Activated CD8-positive, alpha-beta T cell treated with anti-CD3 and anti-CD28 coated beads, Interleukin-2, amount 10 ng/mL, durations not matched to agents 7 days and 5 days (primary cell): ENCODE measurements at regions of chr20 and their contacts with region 1.

Region 1: GRCh38 chr20:51480507-51481270 is 61.8 kb downstream of the NFATC2 start:
- DNase-seq: peak; percentile 48
- ATAC-seq: peak; percentile 59
- H3K4me3 Mint-ChIP-seq: peak overlapping the region; percentile 53
- H3K27ac Mint-ChIP-seq: peak overlapping the region; percentile 92
- H3K4me1 Mint-ChIP-seq: peaks cover 92% of the 10 kb centered on the region
- H3K27me3 Mint-ChIP-seq: no peaks in the 10 kb centered on the region

Region 2: DNA sequence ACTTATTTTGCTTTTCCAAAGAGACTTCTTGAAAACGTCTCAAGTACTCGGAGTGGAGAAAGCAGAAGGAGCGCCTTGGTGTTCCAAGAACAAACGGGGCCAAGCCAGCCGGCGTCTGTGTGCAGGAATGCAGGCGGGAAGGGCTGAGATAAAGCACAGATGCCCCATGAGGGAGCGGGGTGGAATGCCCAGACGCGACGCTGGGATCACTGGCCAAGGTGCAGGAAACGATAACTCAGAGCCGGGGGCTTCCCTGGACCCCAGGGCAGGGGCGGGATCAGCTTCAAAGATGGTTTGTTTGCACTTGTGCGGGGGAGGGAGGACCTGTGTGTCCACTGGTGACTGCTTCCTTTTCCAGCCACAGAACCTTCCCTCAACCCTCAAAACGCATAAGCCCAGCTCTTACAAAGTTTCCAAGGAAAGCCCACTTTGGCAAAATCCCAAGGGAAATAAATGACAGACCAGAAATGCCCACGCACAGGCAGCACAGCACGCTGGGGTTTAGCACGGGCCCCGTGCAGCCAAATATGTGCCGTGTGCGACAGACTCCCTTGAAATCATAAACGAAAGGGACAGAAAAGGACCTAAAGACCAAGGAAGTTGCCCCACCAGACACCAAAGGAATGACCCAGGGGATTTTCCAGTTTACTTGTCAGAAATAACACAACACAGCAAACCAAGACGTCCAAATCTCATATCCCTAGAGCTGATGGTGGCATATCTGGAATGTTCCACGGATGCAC is 52.1 kb before region 1 on chr20:
- CTCF ChIA-PET with region 1: no interaction called
- POLR2A ChIA-PET with region 1: no interaction called
- DNase-seq: no peak
- ATAC-seq: no peak
- H3K4me3 Mint-ChIP-seq: no peak overlapping the region
- H3K27ac Mint-ChIP-seq: no peak overlapping the region
- H3K4me1 Mint-ChIP-seq: peaks cover 87% of the 10 kb centered on the region
- H3K27me3 Mint-ChIP-seq: no peaks in the 10 kb centered on the region

Region 3: DNA sequence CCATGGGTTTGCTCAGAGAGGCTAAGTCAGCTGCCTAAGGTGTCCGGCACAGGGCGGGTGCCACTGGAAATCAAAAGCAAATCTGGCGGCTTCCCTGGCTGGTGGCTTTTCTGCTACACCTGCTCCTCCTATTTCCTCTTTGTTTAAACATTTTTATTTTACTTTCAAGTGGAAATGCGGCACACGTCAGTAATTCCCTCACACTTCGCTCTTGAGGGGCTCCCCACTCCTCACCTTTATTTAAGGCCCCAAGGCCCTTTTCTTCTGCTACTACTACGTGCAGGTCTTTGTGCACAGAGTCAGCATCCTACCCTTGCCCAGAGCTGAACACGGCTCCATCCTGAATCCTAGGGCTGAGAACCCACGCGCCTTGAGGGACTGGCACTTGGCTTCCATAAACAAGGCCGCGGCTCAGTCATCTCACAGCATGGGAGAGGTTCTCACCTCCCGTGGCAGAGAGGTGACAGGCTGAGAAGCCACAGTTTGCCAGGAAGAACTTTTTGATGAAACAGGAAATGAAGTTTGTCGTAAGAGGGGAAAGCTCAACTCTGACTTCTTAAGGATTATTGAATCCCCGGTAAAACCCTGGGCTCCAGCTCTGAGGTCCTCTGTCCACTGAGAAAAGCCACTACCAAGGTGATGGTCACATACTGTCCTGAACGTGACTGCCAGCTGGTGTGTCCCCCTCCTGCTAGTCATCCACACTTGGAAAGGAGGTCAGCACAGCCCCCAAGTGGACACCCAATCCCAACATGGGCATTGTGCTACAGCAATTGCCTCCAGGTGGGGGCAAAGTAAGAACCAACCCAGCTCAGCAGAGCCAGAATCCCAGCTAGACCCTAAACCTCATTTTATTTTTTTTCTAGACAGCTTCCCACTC is 13.8 kb after region 1 on chr20:
- CTCF ChIA-PET with region 1: interaction called, 10 read pairs
- POLR2A ChIA-PET with region 1: interaction called, 6 read pairs
- DNase-seq: peak; percentile 43
- ATAC-seq: peak; percentile 31
- H3K4me3 Mint-ChIP-seq: peak overlapping the region; percentile 66
- H3K27ac Mint-ChIP-seq: peak overlapping the region; percentile 85
- H3K4me1 Mint-ChIP-seq: peaks cover 95% of the 10 kb centered on the region
- H3K27me3 Mint-ChIP-seq: no peaks in the 10 kb centered on the region